ENCODE measurements at regions of chr2 and their contacts with region 1.

Region 1: GRCh38 chr2:178914259-178914849 is 107.1 kb upstream of the TTN start:
- DNase-seq: peak; percentile 85
- ATAC-seq: peak; percentile 87

Region 2: GRCh38 chr2:178796079-178796677 is 118.2 kb before region 1 on chr2:
- intact Hi-C with region 1: loop called (anchors 10 kb)
- DNase-seq: no peak
- ATAC-seq: no peak